Pancreas (tissue), 10 donors: ENCODE measurements at regions of chr6 and their contacts with region 1.

Region 1: GRCh38 chr6:82270881-82271645 is 23.5 kb upstream of the IBTK start:
- DNase-seq: no peak
- ATAC-seq: peak; percentile 43 to 81 (median 70)
- H3K4me3 ChIP-seq: no peak overlapping the region
- H3K27ac ChIP-seq: no peak overlapping the region
- H3K4me1 ChIP-seq: no peaks in the 10 kb centered on the region
- H3K27me3 ChIP-seq: no peaks in the 10 kb centered on the region
- CTCF ChIP-seq: peak in 3 of 4 donors; percentile 35 to 46 (median 42)

Region 2: GRCh38 chr6:82511546-82511945 is 240.5 kb after region 1 on chr6:
- intact Hi-C with region 1: no loop called
- DNase-seq: no peak
- ATAC-seq: no peak
- H3K4me3 ChIP-seq: no peak overlapping the region
- H3K27ac ChIP-seq: no peak overlapping the region
- H3K4me1 ChIP-seq: no peaks in the 10 kb centered on the region
- H3K27me3 ChIP-seq: no peaks in the 10 kb centered on the region
- CTCF ChIP-seq: no peak

Region 3: DNA sequence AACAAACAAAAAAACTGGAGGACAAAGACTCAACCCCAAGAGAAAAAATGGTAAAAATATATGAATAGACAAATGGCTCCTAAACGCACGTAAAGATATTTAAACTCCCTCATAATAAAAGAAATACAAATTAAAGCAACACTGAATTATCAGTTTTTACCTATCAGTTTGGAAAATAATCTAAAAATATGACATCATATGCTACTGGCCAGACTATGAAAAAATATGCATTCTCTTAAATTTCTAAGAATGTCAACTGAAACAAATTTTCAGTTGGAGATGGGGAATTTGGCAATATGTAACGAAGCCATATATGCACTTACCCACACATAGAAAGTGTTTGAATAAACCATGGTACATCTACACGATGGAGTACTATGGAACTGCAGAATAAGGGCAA is 270.2 kb after region 1 on chr6:
- intact Hi-C with region 1: no loop called
- DNase-seq: no peak
- ATAC-seq: no peak
- H3K4me3 ChIP-seq: no peak overlapping the region
- H3K27ac ChIP-seq: no peak overlapping the region
- H3K4me1 ChIP-seq: no peaks in the 10 kb centered on the region
- H3K27me3 ChIP-seq: no peaks in the 10 kb centered on the region
- CTCF ChIP-seq: no peak

Region 4: GRCh38 chr6:83051377-83052172 is 780.5 kb after region 1 on chr6:
- intact Hi-C with region 1: loop called in 1 of 3 experiments (anchors 5 kb)
- DNase-seq: no peak
- ATAC-seq: peak in 2 of 4 donors; percentile 23 to 48
- H3K4me3 ChIP-seq: no peak overlapping the region
- H3K27ac ChIP-seq: no peak overlapping the region
- H3K4me1 ChIP-seq: no peaks in the 10 kb centered on the region
- H3K27me3 ChIP-seq: no peaks in the 10 kb centered on the region
- CTCF ChIP-seq: no peak

Region 5: GRCh38 chr6:83062225-83062624 is 791.2 kb after region 1 on chr6:
- intact Hi-C with region 1: loop called in 1 of 3 experiments (anchors 5 kb)
- DNase-seq: no peak
- ATAC-seq: no peak
- H3K4me3 ChIP-seq: no peak overlapping the region
- H3K27ac ChIP-seq: no peak overlapping the region
- H3K4me1 ChIP-seq: peaks cover 0 to 12% (median 7%) of the 10 kb centered on the region in 3 donors
- H3K27me3 ChIP-seq: no peaks in the 10 kb centered on the region
- CTCF ChIP-seq: no peak